ENCODE measurements at regions of chr19 and their contacts with region 1.

Region 1: GRCh38 chr19:4328243-4328990 is 10.2 kb downstream of the STAP2 start:
- DNase-seq: peak; percentile 87 to 96 (median 93)
- ATAC-seq: peak; percentile 93
- H3K4me3 ChIP-seq: peak overlapping the region; percentile 65
- H3K4me3 Mint-ChIP-seq: peak overlapping the region; percentile 83 to 90 (median 87)
- H3K27ac ChIP-seq: peak overlapping the region; percentile 52
- H3K27ac Mint-ChIP-seq: peak overlapping the region; percentile 72 to 98 (median 91)
- H3K4me1 ChIP-seq: peaks cover 11 to 14% of the 10 kb centered on the region in 2 donors
- H3K4me1 Mint-ChIP-seq: peaks cover 8 to 28% (median 24%) of the 10 kb centered on the region in 7 donors
- H3K27me3 ChIP-seq: no peaks in the 10 kb centered on the region
- H3K27me3 Mint-ChIP-seq: peaks cover 0 to 4% (median 0%) of the 10 kb centered on the region in 5 donors

Region 2: GRCh38 chr19:3434712-3435553 is 893.5 kb before region 1 on chr19:
- CTCF ChIA-PET with region 1: no interaction called
- POLR2A ChIA-PET with region 1: no interaction called
- intact Hi-C with region 1: loop called in 1 of 2 experiments (anchors 5 kb)
- DNase-seq: peak; percentile 91 to 97 (median 96)
- ATAC-seq: peak; percentile 99
- H3K4me3 ChIP-seq: peak overlapping the region; percentile 70
- H3K4me3 Mint-ChIP-seq: peak overlapping the region; percentile 87 to 100 (median 96)
- H3K27ac ChIP-seq: peak overlapping the region; percentile 86
- H3K27ac Mint-ChIP-seq: peak overlapping the region; percentile 95 to 99 (median 98)
- H3K4me1 ChIP-seq: peaks cover 9 to 11% of the 10 kb centered on the region in 2 donors
- H3K4me1 Mint-ChIP-seq: peaks cover 7 to 18% (median 14%) of the 10 kb centered on the region in 7 donors
- H3K27me3 ChIP-seq: no peaks in the 10 kb centered on the region
- H3K27me3 Mint-ChIP-seq: no peaks in the 10 kb centered on the region

Region 3: DNA sequence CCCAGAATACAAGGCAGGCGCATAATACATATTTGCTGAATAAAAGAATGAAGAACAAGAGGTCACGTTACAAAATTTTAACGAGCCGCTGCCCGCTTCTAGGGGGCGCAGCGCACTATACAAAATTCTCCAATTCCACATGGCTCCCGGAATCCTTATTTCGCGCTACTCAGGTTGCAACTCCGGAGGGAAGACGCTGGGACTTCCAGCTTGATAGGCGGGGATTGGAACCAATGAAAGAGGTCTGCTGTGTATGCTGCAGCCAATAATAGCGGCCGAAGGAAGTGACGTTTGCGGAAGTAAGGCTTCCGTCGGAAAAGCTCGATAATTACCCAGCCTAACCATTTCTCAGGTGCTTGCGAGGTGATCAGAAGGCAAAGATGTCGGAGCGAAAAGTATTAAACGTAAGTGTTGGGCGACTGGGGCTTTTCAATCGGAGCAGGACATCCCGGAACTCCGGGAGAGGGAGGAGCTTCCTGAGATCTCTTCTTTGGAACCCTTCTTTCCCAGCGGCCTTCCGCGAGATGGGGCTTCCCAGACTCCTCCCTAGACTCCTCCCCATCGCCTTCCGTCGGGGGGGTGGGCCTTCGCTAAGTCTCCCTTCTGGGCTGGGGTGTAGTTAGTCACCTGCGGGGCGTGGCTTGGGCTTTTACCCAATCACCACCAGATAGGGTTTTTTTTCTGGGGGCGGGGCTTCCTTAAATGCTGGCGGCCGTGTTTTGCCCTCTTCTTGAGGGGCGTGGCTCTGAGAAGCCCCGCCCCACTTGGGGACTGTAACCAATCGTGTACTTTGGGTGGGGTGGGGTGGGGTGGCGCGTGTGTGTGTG is 81.4 kb before region 1 on chr19 and contains the start of gene YJU2:
- CTCF ChIA-PET with region 1: no interaction called
- POLR2A ChIA-PET with region 1: interaction called, 5 read pairs
- intact Hi-C with region 1: loop called (anchors 1 kb)
- DNase-seq: peak; percentile 92 to 100 (median 99)
- ATAC-seq: peak; percentile 96
- H3K4me3 ChIP-seq: peak within 1 kb of the TSS; percentile 100
- H3K4me3 Mint-ChIP-seq: peak within 1 kb of the TSS; percentile 85 to 98 (median 96)
- H3K27ac ChIP-seq: peak within 1 kb of the TSS; percentile 99
- H3K27ac Mint-ChIP-seq: peak within 1 kb of the TSS; percentile 97 to 100 (median 99)
- H3K4me1 ChIP-seq: peaks cover 12 to 13% of the 10 kb centered on the region in 2 donors
- H3K4me1 Mint-ChIP-seq: peaks cover 10 to 33% (median 24%) of the 10 kb centered on the region in 7 donors
- H3K27me3 ChIP-seq: no peaks in the 10 kb centered on the region
- H3K27me3 Mint-ChIP-seq: peaks cover 0 to 2% (median 0%) of the 10 kb centered on the region in 5 donors
- total RNA-seq, gene YJU2: 28.5 to 42.1 (median 31.9) TPM

Region 4: DNA sequence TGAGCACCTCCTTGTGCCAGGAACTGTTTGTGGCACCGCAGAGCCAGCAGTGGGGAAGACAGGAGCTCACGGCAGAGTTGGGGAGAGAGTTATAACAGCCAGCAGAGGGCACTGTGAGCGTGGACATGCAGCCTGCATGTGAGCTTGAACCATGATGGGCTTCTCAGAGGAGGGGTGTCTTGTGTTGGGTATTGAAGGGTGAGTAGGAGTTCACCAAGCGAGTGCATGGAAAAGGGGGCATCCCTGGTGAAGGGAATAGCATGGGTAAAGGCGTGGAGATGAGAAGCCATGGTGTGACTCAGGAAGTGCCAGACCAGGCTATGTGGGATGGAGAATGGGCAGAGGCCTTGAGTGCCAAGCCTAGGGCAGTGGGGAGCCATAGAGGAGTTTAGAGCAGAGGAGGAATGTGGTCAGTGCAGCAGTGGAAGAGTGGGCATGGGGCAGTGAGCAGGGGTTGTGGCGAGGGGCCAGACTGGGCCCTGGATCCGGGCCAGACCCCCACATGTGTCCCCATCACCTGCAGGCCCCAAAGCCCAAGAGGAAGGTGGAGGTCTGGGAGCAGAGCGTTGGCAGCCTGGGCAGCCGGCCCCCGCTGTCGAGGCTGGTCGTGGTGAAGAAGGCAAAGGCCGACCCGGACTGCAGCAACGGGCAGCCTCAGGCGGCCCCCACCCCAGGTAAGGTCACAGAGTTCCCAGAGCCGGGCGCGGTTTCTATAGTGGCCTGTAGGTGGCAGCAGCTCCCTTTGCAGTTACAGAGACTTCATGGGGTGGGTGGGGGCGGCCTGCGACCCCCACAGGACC is 61.1 kb before region 1 on chr19:
- CTCF ChIA-PET with region 1: interaction called, 4 read pairs
- POLR2A ChIA-PET with region 1: interaction called, 3 read pairs
- intact Hi-C with region 1: loop called in 1 of 2 experiments (anchors 1 kb)
- DNase-seq: peak; percentile 33 to 68 (median 48)
- ATAC-seq: peak; percentile 76
- H3K4me3 ChIP-seq: no peak overlapping the region
- H3K4me3 Mint-ChIP-seq: peak overlapping the region in 1 of 10 donors; percentile 19
- H3K27ac ChIP-seq: no peak overlapping the region
- H3K27ac Mint-ChIP-seq: peak overlapping the region in 6 of 9 donors; percentile 0 to 90 (median 60)
- H3K4me1 ChIP-seq: peaks cover 0 to 6% of the 10 kb centered on the region in 2 donors
- H3K4me1 Mint-ChIP-seq: peaks cover 18 to 29% (median 23%) of the 10 kb centered on the region in 7 donors
- H3K27me3 ChIP-seq: no peaks in the 10 kb centered on the region
- H3K27me3 Mint-ChIP-seq: no peaks in the 10 kb centered on the region

Region 5: DNA sequence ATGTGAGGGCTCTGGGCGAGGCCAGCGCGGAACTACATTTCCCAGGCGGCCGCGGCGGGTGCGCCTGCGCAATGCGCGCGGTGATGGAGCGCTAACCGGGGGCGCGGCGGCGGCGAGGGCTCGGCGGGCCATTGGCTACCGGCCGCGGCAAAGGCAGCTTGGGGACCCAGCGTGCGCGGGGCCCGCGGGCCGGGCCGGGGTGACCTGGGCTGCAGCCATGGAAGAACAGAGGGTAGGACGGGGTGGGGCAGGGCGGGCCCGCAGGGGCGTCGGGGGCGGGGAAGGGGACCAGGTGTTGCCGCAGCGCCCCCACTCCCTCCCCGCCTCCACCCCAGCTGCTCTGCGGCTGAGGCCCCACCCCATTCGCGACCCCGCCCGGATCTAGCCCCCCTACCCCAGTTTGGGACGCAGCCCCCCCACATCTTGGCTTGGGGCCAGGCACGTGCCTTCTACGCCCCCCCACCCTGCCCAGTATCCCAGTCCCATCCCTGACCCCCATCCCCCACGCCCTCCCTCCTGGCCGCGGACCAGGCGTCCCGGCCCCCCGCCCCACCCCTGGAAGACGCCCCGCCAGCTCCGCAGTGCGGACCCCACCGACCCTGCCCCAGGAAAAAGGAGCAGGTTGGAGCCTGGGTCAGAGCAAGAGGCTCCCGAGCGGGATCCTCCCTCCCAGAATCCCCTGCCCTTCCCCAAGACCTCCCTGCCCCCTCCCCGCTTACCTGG is 23.7 kb before region 1 on chr19 and contains the start of gene FSD1:
- CTCF ChIA-PET with region 1: no interaction called
- POLR2A ChIA-PET with region 1: interaction called, 4 read pairs
- intact Hi-C with region 1: loop called (anchors 1 to 2 kb)
- DNase-seq: peak; percentile 32 to 89 (median 56)
- ATAC-seq: peak; percentile 65
- H3K4me3 ChIP-seq: peak within 1 kb of the TSS; percentile 43
- H3K4me3 Mint-ChIP-seq: peak within 1 kb of the TSS; percentile 59 to 98 (median 79)
- H3K27ac ChIP-seq: peak within 1 kb of the TSS; percentile 35
- H3K27ac Mint-ChIP-seq: peak within 1 kb of the TSS in 8 of 9 donors; percentile 48 to 96 (median 84)
- H3K4me1 ChIP-seq: peaks cover 4 to 28% of the 10 kb centered on the region in 2 donors
- H3K4me1 Mint-ChIP-seq: peaks cover 8 to 43% (median 33%) of the 10 kb centered on the region in 7 donors
- H3K27me3 ChIP-seq: no peaks in the 10 kb centered on the region
- H3K27me3 Mint-ChIP-seq: no peaks in the 10 kb centered on the region
- total RNA-seq, gene FSD1: 1.8 to 18.9 (median 3.4) TPM

Region 6: DNA sequence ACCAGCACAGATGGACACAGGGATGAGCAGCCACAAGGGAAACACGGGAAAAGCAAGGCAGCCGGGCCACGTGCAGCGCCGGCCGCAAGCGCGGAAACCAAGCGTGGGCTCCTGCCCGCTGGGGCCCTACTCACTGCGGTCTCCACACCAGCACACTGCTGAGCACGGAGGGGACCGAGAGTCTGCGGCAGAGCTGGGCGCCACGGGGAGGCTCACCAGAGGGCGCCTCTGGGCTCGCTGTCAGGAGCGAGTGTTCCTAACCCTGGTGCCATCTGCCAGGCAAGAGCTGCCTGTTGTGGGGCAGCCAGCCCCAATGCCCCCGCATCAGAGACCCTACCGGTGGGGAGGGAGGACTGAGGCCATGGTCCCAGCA is 41.5 kb after region 1 on chr19:
- CTCF ChIA-PET with region 1: no interaction called
- POLR2A ChIA-PET with region 1: interaction called, 3 read pairs
- intact Hi-C with region 1: loop called in 1 of 2 experiments (anchors 1 kb)
- DNase-seq: peak; percentile 55 to 80 (median 67)
- ATAC-seq: peak; percentile 80
- H3K4me3 ChIP-seq: peak overlapping the region; percentile 76
- H3K4me3 Mint-ChIP-seq: peak overlapping the region; percentile 87 to 97 (median 94)
- H3K27ac ChIP-seq: peak overlapping the region; percentile 68
- H3K27ac Mint-ChIP-seq: peak overlapping the region; percentile 81 to 96 (median 94)
- H3K4me1 ChIP-seq: peaks cover 21 to 32% of the 10 kb centered on the region in 2 donors
- H3K4me1 Mint-ChIP-seq: peaks cover 22 to 57% (median 42%) of the 10 kb centered on the region in 7 donors
- H3K27me3 ChIP-seq: no peaks in the 10 kb centered on the region
- H3K27me3 Mint-ChIP-seq: no peaks in the 10 kb centered on the region

Region 7: DNA sequence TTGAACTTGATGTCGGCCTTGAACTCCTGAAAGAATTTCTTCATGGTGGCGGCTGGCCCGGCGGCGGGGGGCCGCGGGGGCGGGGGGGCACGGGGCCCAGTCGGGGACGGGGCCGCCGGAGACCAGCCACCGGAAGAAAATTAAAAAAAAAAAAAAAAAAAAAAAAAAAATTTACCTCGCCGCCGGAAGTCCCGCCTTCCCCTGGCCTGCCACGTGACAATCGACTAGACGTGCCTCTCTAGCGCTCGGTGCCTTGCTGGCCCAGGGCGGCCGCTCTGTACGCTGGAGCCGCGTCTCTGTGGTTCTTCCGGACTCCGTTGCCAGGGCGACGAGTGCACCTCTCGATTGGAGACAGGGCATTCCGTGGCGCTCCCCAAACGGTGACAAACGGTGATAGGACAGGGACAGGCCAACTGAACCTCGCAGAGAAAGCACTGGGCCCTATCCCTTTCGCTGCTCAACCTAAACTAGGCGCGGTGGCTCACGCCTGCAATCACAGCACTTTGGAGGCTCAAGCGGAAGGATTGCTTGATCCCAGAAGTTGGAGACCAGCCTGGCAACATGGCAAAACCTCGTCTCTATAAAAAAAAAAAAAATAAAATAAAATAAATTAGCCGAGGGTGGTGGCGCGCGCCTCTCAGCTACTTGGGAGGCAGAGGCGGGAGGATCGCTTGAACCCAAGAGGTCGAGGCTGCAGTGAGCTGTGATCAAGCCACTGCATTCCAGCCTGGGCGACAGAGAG is 129.4 kb after region 1 on chr19 and contains the start of gene UBXN6:
- CTCF ChIA-PET with region 1: no interaction called
- POLR2A ChIA-PET with region 1: no interaction called
- intact Hi-C with region 1: loop called in 1 of 2 experiments (anchors 1 kb)
- DNase-seq: peak; percentile 92 to 99 (median 96)
- ATAC-seq: peak; percentile 99
- H3K4me3 ChIP-seq: peak within 1 kb of the TSS; percentile 64
- H3K4me3 Mint-ChIP-seq: peak within 1 kb of the TSS; percentile 83 to 98 (median 89)
- H3K27ac ChIP-seq: peak within 1 kb of the TSS; percentile 83
- H3K27ac Mint-ChIP-seq: peak within 1 kb of the TSS; percentile 89 to 97 (median 93)
- H3K4me1 ChIP-seq: peaks cover 10% of the 10 kb centered on the region in 2 donors
- H3K4me1 Mint-ChIP-seq: peaks cover 9 to 25% (median 16%) of the 10 kb centered on the region in 7 donors
- H3K27me3 ChIP-seq: no peaks in the 10 kb centered on the region
- H3K27me3 Mint-ChIP-seq: no peaks in the 10 kb centered on the region
- total RNA-seq, gene UBXN6: 49.2 to 68.6 (median 53.1) TPM